A673 (cell line): ENCODE measurements at regions of chr6 and their contacts with region 1.

Region 1: DNA sequence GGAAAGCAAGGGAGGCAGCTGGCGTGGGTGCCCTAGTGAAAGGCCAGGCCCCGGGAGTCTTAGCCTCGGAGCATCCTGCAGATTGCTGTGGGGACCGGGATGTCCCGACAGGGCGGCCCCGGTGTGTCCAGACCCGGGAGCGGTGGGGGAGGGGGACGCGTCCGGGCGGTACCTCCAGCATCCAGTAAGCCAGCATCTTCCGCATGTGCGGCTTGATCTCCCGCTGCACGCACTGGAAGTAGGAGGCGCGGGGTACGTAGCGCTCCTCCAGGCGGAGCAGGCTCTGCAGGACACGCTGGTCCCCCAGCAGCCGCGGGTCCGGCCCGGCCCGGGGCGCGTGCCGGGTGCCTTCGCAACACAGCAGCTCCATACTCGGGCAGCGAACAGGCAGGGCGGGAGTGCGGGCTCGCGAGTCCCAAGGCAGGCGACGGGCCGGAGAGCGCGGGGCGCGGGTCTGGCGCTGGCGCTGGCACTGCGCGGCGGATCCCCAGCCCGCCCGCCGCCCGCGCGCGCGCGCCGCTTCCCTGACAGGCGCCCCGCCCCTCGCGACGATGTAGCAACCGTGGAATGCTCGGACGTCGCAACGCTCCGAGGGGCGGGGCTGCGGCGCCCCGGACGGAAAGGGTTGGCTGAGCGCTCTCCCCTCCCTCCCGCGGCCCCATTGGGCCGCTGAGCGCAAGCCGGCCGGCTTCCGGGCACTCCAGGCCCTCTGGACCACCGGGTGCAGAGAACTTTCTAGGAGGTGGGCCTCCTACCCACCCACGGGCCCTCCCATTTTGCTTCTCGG is at the start of gene CCND3:
- DNase-seq: peak; percentile 94
- H3K4me3 ChIP-seq: peak within 1 kb of the TSS; percentile 74
- H3K27ac ChIP-seq: peak within 1 kb of the TSS; percentile 62
- H3K4me1 ChIP-seq: peaks cover 27% of the 10 kb centered on the region
- H3K27me3 ChIP-seq: no peaks in the 10 kb centered on the region
- CTCF ChIP-seq: no peak
- total RNA-seq, gene CCND3: 31.9 and 39.9 TPM in 2 replicates

Region 2: GRCh38 chr6:42166444-42167141 is 225.1 kb after region 1 on chr6:
- CTCF ChIA-PET with region 1: no interaction called
- POLR2A ChIA-PET with region 1: no interaction called
- intact Hi-C with region 1: loop called (anchors 5 kb)
- DNase-seq: peak; percentile 86
- H3K4me3 ChIP-seq: no peak overlapping the region
- H3K27ac ChIP-seq: no peak overlapping the region
- H3K4me1 ChIP-seq: no peaks in the 10 kb centered on the region
- H3K27me3 ChIP-seq: no peaks in the 10 kb centered on the region
- CTCF ChIP-seq: peak; percentile 90